Activated CD4-positive, alpha-beta T cell treated with anti-CD3 and anti-CD28 coated beads for 36 hours (primary cell): ENCODE measurements at regions of chrX and their contacts with region 1.

Region 1: DNA sequence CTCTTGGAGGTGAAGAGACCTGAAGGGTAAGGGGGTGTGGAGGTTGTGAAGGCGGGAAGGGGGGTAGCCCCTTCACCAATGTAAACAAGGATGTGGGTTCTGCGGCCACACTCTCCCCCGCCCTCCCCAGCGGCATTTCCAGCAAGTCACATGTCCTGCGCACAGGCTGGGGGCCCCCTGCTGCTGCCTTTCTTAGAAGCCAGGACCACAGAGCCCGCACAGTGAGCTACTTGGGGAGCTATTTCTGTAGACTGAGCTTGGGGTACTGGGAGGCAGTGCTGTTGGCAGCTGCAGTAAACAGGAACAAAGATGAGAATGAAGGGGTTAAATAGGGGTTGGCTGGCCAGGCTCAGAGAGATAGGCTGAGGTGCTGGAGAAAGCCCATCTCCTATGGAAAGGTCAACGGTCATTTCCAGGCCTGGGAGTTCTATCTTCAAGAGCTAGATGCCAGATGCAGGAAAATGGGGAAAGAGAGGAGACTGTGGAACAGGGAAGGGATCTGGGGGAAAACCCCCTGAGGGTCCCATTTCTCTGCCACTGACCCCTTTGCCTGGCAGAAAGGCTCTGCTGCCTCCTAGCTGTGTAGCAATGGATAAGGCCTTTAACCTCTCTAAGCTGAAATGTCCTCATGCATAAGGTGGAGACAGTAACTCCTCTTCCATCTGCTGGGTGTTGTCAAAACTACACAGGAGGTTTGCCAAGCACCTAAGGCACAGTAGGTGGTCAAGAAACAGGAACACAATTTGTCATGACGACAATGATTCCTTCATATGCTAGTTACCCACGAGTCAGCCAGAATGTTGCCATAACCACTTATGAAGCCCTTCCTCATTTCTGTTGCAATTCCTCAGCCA is 18.5 kb upstream of the PIM2 start:
- DNase-seq: peak; percentile 93
- ATAC-seq: peak; percentile 61
- H3K4me3 Mint-ChIP-seq: peak overlapping the region; percentile 64
- H3K27ac Mint-ChIP-seq: peak overlapping the region; percentile 96
- H3K4me1 Mint-ChIP-seq: peaks cover 81% of the 10 kb centered on the region
- H3K27me3 Mint-ChIP-seq: no peaks in the 10 kb centered on the region

Region 2: DNA sequence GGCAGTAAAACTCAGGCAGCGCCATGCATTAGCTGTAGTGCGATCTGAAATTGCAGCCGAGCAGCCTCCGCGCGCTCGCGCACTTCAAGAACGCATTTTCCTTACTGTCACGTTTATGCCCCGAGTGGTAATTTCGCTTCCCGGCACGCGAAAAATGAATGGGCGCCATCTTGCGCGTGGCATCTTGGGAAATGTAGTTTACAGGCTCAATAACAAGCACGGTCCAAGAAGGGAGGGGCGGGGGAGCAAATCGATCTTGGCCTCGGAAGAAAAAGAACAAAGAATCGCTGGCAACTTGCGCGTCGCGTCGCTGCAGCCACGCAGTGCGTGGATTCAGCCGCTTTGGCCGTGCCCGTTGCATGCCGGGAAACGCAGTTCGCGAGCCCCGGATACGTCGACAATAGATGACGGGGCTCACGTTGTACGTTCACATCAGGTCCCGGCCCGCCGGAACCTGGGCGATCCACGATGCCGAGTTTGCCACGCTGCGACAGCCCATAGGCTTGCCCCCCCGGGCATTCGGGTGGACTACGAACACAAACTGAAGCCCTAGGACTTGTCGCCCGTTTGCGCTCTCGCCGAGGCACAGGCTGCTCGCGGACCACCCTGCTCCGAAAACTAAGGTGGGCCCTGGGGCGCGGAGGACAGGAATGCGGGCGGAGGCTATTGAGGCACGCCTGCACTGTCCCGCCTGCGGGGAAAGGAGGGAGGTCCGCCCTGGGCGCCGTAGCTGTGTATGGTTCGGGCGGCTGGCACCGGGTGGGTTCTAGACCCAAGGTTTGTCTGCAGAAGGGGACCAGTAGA is 461.3 kb before region 1 on chrX and contains the start of gene FTSJ1:
- CTCF ChIA-PET with region 1: no interaction called
- POLR2A ChIA-PET with region 1: no interaction called
- intact Hi-C with region 1: no loop called
- DNase-seq: peak; percentile 88
- ATAC-seq: peak; percentile 91
- H3K4me3 Mint-ChIP-seq: peak within 1 kb of the TSS; percentile 93
- H3K27ac Mint-ChIP-seq: peak within 1 kb of the TSS; percentile 90
- H3K4me1 Mint-ChIP-seq: peaks cover 36% of the 10 kb centered on the region
- H3K27me3 Mint-ChIP-seq: no peaks in the 10 kb centered on the region
- total RNA-seq, gene FTSJ1: 73.0 to 93.7 TPM

Region 3: GRCh38 chrX:48714573-48714972 is 222.7 kb before region 1 on chrX:
- CTCF ChIA-PET with region 1: no interaction called
- POLR2A ChIA-PET with region 1: interaction called, 3 read pairs
- intact Hi-C with region 1: loop called in 1 of 2 experiments (anchors 5 kb)
- DNase-seq: no peak
- ATAC-seq: peak; percentile 16
- H3K4me3 Mint-ChIP-seq: peak overlapping the region; percentile 4
- H3K27ac Mint-ChIP-seq: peak overlapping the region; percentile 86
- H3K4me1 Mint-ChIP-seq: peaks cover 78% of the 10 kb centered on the region
- H3K27me3 Mint-ChIP-seq: no peaks in the 10 kb centered on the region

Region 4: GRCh38 chrX:48801280-48802088 is 135.8 kb before region 1 on chrX and contains the start of gene HDAC6:
- CTCF ChIA-PET with region 1: no interaction called
- POLR2A ChIA-PET with region 1: no interaction called
- intact Hi-C with region 1: no loop called
- DNase-seq: peak; percentile 96
- ATAC-seq: peak; percentile 89
- H3K4me3 Mint-ChIP-seq: peak within 1 kb of the TSS; percentile 90
- H3K27ac Mint-ChIP-seq: peak within 1 kb of the TSS; percentile 98
- H3K4me1 Mint-ChIP-seq: peaks cover 15% of the 10 kb centered on the region
- H3K27me3 Mint-ChIP-seq: no peaks in the 10 kb centered on the region
- total RNA-seq, gene HDAC6: 59.2 to 69.7 TPM

Region 5: DNA sequence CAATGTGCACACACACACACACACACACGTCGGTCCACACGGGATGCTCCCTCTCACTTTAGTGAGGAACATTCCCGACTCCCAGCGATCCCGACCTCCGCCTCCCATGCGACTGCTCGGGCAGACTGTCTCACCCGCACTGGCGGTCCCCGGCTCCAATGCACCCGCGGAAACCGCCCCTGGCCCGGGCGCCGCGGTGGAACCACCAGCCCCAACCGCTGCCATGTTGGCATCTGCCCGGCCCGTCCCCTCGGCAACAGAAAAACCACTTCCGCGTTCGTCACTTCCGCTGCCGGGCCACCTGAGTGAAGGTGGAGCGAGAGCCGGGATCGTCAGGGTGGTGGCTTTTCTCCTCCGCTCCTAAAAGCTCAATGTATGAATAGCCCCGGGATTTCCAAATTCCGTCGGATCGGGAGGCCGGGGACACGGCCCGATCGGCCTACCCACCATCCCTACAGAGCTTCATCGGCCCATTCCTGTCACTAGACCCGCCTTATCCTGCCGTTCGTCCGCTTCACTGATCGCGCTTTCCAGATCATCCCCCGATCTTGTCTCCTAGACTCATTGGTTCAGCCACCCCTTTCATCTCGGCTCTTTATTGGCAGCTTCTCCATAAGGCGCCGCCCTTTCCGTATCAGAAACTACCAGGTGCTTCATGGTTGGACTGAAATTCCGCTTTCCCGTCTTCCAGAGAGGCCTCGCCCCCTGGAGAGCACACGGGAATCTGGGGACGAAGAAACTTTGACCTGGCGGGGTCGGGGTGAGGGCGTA is 25.7 kb before region 1 on chrX and contains the start of gene SLC35A2:
- CTCF ChIA-PET with region 1: interaction called, 9 read pairs
- POLR2A ChIA-PET with region 1: interaction called, 39 read pairs
- intact Hi-C with region 1: no loop called
- DNase-seq: peak; percentile 93
- ATAC-seq: peak; percentile 69
- H3K4me3 Mint-ChIP-seq: peak within 1 kb of the TSS; percentile 97
- H3K27ac Mint-ChIP-seq: peak within 1 kb of the TSS; percentile 92
- H3K4me1 Mint-ChIP-seq: peaks cover 39% of the 10 kb centered on the region
- H3K27me3 Mint-ChIP-seq: no peaks in the 10 kb centered on the region
- total RNA-seq, gene SLC35A2: 19.7 to 20.3 TPM